Activated B cell treated with CpG ODN at 0.5 μM for 24 hours (primary cell): ENCODE measurements at regions of chr1 and their contacts with region 1.

Region 1: GRCh38 chr1:147890177-147890790 is 12.3 kb upstream of the GJA8 start:
- DNase-seq: peak; percentile 40
- ATAC-seq: peak; percentile 56
- H3K4me3 Mint-ChIP-seq: no peak overlapping the region
- H3K27ac Mint-ChIP-seq: no peak overlapping the region
- H3K4me1 Mint-ChIP-seq: no peaks in the 10 kb centered on the region
- H3K27me3 Mint-ChIP-seq: peaks cover 2% of the 10 kb centered on the region
- CTCF ChIP-seq: no peak

Region 2: DNA sequence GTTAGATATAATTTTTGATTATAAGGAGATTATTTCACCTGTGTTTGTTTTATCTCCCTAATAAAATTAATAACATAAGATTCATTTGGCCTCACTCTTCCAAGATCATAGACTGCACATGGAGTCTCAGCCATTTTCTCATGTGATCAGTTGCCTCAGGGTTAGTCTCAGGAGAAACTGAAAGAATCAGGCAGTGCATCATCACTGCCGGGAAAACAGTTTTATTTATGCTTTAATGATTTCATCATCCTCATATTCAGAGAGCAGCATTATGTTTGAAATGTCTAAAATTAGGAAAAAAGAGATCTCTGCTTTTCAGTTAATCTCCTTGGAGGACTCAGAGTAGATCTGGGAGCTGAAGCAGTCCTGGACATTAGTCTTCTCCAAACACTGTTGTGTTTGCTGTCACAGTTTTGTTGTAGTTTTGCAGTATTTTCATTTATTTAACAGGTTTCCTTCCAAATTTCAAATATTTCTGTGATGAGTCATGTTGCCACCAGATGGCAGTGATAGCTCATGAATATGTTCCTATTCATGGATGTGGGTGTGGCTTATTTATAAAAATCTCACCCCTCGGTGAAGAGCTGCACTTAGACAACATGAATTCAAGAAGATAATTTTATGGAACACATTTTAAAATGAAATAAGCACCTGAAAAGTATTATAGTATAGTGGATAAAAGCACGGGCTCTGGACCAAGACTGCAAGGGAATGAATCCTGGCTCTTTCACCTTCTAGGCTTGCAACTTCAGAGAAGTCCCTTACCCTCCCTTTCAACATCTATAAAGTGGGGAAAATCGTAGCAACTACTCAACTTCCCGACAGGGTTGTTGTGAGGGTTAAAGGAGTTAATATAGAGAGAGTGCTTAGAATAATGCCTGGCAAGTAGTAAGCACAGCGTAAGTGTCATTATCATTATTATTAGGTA is 616.6 kb before region 1 on chr1:
- CTCF ChIA-PET with region 1: interaction called, 15 read pairs
- POLR2A ChIA-PET with region 1: no interaction called
- intact Hi-C with region 1: loop called (anchors 1 kb)
- DNase-seq: no peak
- ATAC-seq: peak; percentile 49
- H3K4me3 Mint-ChIP-seq: no peak overlapping the region
- H3K27ac Mint-ChIP-seq: no peak overlapping the region
- H3K4me1 Mint-ChIP-seq: peaks cover 3% of the 10 kb centered on the region
- H3K27me3 Mint-ChIP-seq: no peaks in the 10 kb centered on the region
- CTCF ChIP-seq: peak; percentile 21

Region 3: DNA sequence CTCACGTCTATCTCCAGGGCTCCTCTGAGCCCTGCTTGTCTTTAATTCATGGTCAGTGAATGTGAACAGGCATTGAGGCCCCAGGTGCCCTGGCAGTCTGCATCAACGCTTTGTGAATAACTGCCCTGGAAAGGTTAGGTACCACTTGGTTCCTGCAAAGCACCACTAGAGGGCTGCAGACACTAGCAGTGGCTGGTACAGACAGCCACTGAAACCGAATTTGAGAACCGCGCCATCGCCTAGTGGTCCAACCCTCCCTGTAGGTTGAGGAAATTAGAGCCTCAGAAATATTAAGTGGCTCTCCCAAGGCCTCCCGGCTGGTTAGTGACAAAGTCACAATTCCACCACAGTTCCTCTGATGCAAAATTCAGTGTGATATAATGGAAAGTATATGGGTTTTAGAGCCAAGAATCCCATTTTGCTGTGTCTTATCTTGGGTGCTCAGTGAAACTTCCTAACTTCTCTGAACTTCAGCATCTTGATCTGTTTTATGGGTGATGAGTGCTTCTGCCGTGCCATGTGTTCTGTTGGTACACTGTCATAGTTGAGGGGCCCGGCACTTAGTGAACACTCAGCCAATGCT is 395.2 kb before region 1 on chr1:
- CTCF ChIA-PET with region 1: interaction called, 18 read pairs
- POLR2A ChIA-PET with region 1: no interaction called
- intact Hi-C with region 1: loop called (anchors 1 kb)
- DNase-seq: peak; percentile 23
- ATAC-seq: peak; percentile 82
- H3K4me3 Mint-ChIP-seq: no peak overlapping the region
- H3K27ac Mint-ChIP-seq: no peak overlapping the region
- H3K4me1 Mint-ChIP-seq: no peaks in the 10 kb centered on the region
- H3K27me3 Mint-ChIP-seq: peaks cover 11% of the 10 kb centered on the region
- CTCF ChIP-seq: no peak

Region 4: DNA sequence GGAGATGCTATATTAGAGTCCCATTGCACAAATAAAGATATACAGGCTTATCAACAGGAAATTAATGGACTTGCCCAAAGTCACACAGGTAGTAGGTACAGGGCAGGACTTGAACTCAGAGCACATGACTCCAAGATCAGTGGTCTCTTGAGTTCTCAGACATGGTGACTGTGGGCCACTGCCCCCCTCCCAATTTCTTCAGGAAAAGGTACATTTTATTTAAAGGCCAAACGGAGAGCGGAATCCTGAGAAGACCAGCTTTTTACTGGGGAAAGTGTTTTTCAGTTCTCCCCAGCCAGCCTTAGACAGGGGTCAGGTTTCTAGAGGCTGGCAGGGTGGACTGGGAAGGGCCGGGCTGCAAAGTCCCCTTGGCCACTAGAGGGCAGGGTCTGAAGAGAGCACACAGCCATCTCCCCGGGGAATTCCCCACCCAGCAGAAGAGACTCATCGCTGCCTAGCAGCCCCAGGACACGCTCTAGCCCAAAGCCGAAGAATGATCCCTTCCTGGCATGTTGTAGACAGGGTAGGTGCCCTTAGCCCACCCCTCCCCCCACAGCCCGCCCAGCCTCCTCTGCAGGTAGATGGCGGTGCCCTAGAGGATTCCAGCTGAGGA is 249.6 kb before region 1 on chr1:
- CTCF ChIA-PET with region 1: interaction called, 6 read pairs
- POLR2A ChIA-PET with region 1: no interaction called
- intact Hi-C with region 1: loop called (anchors 1 kb)
- DNase-seq: peak; percentile 42
- ATAC-seq: peak; percentile 96
- H3K4me3 Mint-ChIP-seq: no peak overlapping the region
- H3K27ac Mint-ChIP-seq: no peak overlapping the region
- H3K4me1 Mint-ChIP-seq: peaks cover 2% of the 10 kb centered on the region
- H3K27me3 Mint-ChIP-seq: no peaks in the 10 kb centered on the region
- CTCF ChIP-seq: peak; percentile 52

Region 5: DNA sequence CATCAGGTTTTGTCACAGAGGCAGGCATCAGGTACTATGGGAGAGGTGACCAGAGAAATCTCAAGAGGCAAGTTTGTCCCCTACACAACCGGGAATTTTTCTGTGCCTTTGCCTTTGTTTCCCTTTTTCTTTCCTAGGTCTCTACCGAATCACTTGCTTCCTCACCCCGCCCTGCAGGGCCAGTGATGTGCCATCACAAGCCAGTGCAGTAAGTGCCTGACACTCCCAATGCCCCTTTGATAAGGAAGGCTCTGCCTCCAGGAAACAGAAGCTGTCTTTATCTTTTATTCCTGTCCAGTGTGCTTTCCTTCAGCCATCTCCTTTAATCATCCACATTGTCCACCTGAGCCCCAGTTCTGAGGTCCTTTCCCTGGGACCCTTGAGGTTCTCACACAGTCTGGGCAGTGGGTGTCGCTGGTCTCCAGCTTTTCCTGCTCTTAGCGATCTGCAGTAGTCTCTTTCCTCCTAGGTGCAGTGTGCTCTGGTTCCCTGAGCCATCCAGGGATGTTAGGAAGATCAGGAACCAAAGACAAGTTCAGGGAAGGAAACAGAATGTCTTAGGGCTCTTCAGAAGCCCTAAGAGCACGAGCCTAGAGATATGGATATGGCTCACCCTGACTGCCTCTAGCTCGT is 166.5 kb before region 1 on chr1:
- CTCF ChIA-PET with region 1: interaction called, 6 read pairs
- POLR2A ChIA-PET with region 1: no interaction called
- intact Hi-C with region 1: loop called (anchors 2 kb)
- DNase-seq: no peak
- ATAC-seq: no peak
- H3K4me3 Mint-ChIP-seq: no peak overlapping the region
- H3K27ac Mint-ChIP-seq: no peak overlapping the region
- H3K4me1 Mint-ChIP-seq: no peaks in the 10 kb centered on the region
- H3K27me3 Mint-ChIP-seq: peaks cover 3% of the 10 kb centered on the region
- CTCF ChIP-seq: no peak

Region 6: GRCh38 chr1:147902183-147902845 is 12.0 kb after region 1 on chr1 and contains the start of gene GJA8:
- CTCF ChIA-PET with region 1: interaction called, 11 read pairs
- POLR2A ChIA-PET with region 1: no interaction called
- intact Hi-C with region 1: no loop called
- DNase-seq: no peak
- ATAC-seq: no peak
- H3K4me3 Mint-ChIP-seq: no peak within 1 kb of the TSS
- H3K27ac Mint-ChIP-seq: no peak within 1 kb of the TSS
- H3K4me1 Mint-ChIP-seq: no peaks in the 10 kb centered on the region
- H3K27me3 Mint-ChIP-seq: peaks cover 11% of the 10 kb centered on the region
- CTCF ChIP-seq: no peak
- total RNA-seq, gene GJA8: not detected in 2 replicates